Activated naive CD4-positive, alpha-beta T cell treated with anti-CD3 and anti-CD28 coated beads for 36 hours (primary cell): ENCODE measurements at regions of chr5 and their contacts with region 1.

Region 1: DNA sequence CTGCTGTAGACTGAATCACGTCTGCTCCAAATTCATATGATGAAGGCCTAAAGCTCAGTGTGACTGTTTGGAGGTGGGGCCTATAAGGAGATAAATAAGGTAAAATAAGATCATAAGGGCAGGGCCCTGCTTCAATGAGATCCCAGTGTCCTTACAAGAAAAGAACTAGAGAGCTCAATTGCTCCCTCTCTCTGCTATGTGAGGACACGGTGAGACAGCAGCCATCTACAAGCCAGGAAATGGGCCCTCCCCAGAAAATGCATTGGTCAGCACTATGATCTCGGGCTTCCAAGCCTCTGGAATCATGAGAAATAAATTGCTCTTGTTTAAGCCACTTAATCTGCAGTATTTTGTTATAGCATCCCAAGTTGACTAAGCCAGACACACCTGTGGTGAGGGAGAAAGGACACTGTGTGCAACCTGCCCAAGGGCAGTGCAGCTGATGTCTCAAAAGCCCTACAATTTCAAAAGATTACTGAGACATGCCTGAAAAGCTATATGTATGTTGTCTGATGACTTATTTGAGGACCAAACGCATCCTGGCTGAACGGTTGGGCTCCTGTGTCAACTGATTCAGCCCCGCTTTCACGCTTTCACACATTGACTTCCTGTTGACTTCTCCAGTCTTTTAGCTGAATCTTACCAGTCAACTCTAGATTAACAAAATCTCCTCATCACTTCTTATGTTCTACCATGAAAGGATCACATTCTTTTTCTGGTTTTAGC is 13.2 kb downstream of the GZMK start:
- DNase-seq: peak; percentile 92
- H3K4me3 Mint-ChIP-seq: no peak overlapping the region
- H3K27ac Mint-ChIP-seq: peak overlapping the region; percentile 83
- H3K4me1 Mint-ChIP-seq: peaks cover 20% of the 10 kb centered on the region
- H3K27me3 Mint-ChIP-seq: no peaks in the 10 kb centered on the region

Region 2: DNA sequence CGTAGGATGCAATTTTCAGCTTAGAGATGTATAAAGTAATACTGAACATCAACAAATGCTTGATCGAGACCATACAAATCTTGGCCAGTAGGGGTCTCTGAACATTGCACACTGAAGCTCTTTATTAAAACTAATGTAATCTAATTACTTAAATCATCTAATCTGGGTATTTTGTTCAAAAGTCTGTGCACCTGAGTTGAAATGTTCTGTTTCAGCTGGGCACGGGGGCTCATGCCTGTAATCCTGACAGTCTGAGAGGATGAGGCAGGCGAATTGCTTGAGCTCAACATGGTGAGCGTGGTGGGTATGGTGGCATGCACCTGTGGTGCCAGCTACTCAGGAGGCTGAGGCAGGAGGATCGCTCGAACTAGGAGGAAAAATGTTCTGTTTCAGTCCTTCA is 92.8 kb before region 1 on chr5:
- CTCF ChIA-PET with region 1: interaction called, 12 read pairs
- intact Hi-C with region 1: no loop called
- DNase-seq: peak; percentile 60
- H3K4me3 Mint-ChIP-seq: no peak overlapping the region
- H3K27ac Mint-ChIP-seq: no peak overlapping the region
- H3K4me1 Mint-ChIP-seq: no peaks in the 10 kb centered on the region
- H3K27me3 Mint-ChIP-seq: no peaks in the 10 kb centered on the region

Region 3: GRCh38 chr5:54959673-54960418 is 77.4 kb before region 1 on chr5:
- CTCF ChIA-PET with region 1: no interaction called
- intact Hi-C with region 1: no loop called
- DNase-seq: peak; percentile 65
- H3K4me3 Mint-ChIP-seq: no peak overlapping the region
- H3K27ac Mint-ChIP-seq: no peak overlapping the region
- H3K4me1 Mint-ChIP-seq: no peaks in the 10 kb centered on the region
- H3K27me3 Mint-ChIP-seq: peaks cover 2% of the 10 kb centered on the region

Region 4: DNA sequence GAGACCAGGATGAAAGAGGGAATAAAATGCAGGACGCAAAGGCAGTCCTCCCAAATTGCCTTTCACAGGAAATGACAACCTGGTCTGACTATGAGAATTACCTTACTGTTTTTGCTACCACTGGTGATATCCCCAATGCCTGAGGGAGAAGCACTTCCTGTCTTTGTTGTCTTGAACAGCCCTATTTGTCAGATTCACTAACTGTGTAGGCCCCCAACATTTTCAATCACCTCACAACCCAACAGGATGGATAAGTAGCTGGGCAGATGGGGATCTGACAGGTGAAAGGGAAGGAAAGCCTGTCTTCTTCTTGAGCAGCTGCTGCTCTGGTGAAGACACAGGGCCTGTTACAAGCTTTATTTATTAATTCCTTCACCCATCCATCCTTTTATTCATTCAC is 61.5 kb before region 1 on chr5:
- CTCF ChIA-PET with region 1: no interaction called
- intact Hi-C with region 1: no loop called
- DNase-seq: no peak
- H3K4me3 Mint-ChIP-seq: no peak overlapping the region
- H3K27ac Mint-ChIP-seq: no peak overlapping the region
- H3K4me1 Mint-ChIP-seq: peaks cover 6% of the 10 kb centered on the region
- H3K27me3 Mint-ChIP-seq: peaks cover 2% of the 10 kb centered on the region

Region 5: GRCh38 chr5:55062039-55062779 is 25.0 kb after region 1 on chr5:
- CTCF ChIA-PET with region 1: interaction called, 6 read pairs
- intact Hi-C with region 1: loop called (anchors 1 kb)
- DNase-seq: peak; percentile 83
- H3K4me3 Mint-ChIP-seq: peak overlapping the region; percentile 51
- H3K27ac Mint-ChIP-seq: peak overlapping the region; percentile 46
- H3K4me1 Mint-ChIP-seq: peaks cover 41% of the 10 kb centered on the region
- H3K27me3 Mint-ChIP-seq: no peaks in the 10 kb centered on the region

Region 6: DNA sequence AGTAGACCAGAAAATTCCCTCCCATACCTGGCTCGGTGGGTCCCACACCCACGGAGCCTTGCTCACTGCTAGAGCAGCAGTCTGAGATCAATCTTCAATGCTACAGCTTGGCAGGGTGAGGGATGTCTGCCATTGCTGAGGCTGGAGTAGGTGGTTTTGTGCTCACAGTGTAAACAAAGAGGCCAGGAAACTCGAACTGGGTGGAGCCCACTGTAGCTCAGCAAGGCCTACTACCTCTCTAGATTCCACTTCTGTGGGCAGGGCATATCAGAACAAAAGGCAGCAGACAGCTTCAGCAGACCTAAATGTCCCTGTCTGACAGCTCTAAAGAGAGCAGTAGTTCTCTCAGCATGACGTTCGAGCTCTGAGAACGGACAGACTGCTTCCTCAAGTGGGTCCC is 59.7 kb after region 1 on chr5:
- CTCF ChIA-PET with region 1: no interaction called
- intact Hi-C with region 1: loop called (anchors 1 kb)
- DNase-seq: peak; percentile 33
- H3K4me3 Mint-ChIP-seq: no peak overlapping the region
- H3K27ac Mint-ChIP-seq: no peak overlapping the region
- H3K4me1 Mint-ChIP-seq: peaks cover 66% of the 10 kb centered on the region
- H3K27me3 Mint-ChIP-seq: peaks cover 6% of the 10 kb centered on the region

Region 7: GRCh38 chr5:55134053-55134722 is 97.0 kb after region 1 on chr5:
- CTCF ChIA-PET with region 1: no interaction called
- intact Hi-C with region 1: loop called (anchors 1 kb)
- DNase-seq: peak; percentile 33
- H3K4me3 Mint-ChIP-seq: no peak overlapping the region
- H3K27ac Mint-ChIP-seq: no peak overlapping the region
- H3K4me1 Mint-ChIP-seq: peaks cover 12% of the 10 kb centered on the region
- H3K27me3 Mint-ChIP-seq: no peaks in the 10 kb centered on the region

Region 8: DNA sequence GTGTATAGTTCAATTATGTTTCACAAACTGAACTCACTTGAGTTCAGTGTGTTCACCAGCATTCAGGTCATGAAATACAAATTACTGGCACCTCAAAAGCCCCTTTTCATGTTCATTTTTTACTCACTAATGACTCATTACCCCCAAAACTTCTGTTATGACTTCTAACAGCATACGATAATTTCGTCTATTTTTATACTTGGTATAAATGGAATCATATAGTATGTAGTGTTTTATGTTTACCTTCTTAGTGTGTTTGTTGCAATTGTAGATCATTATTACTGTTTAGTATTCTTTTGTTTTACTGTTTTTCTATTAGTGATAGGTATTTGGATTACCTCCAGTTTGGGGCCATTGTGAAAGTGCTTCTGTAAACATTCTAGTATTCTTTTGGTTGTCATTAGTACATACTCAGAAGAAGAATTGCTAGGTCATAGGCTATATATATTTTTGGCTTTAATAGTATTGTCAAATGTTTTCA is 734.0 kb after region 1 on chr5:
- CTCF ChIA-PET with region 1: no interaction called
- intact Hi-C with region 1: loop called (anchors 1 kb)
- DNase-seq: no peak
- H3K4me3 Mint-ChIP-seq: no peak overlapping the region
- H3K27ac Mint-ChIP-seq: no peak overlapping the region
- H3K4me1 Mint-ChIP-seq: peaks cover 12% of the 10 kb centered on the region
- H3K27me3 Mint-ChIP-seq: no peaks in the 10 kb centered on the region